Head of caudate nucleus (tissue), 42 donors: ENCODE measurements at regions of chr19 and their contacts with region 1.

Region 1: DNA sequence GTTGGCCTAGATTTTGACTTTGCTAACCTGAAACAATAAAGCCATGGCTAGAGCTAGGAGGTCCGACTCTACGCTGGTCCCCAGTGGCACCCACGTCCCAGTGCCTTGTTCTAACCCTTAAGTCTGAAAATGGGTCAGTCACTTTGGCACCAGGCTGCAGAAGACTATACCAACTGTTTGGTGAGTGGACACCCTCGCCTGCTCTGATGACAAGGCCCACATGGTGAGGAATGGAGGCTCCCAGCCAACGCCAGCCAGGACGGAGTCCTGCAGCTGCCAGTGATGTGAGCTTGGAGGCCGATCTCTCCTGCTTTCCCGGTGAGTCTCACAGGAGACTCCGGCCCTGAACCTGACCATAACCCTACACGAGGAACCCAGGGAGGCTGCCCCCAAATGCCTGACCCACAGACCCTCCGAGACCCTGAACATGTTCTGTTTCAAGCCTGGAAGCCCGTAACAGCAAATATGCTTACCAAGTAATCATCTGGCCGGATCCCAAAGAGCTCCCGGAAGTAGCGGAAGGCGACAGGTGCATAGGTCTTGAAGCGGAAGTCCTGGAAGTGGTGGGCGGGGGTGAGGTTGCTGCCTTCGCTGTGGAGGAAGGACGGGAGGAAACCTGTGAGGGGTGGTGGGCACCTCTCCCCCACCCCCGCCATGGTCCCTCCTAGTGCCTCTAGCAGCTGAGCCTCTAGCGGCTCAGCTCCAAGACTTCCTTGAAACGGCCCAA is 34.1 kb upstream of the CACTIN start:
- DNase-seq: no peak

Region 2: GRCh38 chr19:3716147-3716668 is 55.6 kb after region 1 on chr19:
- intact Hi-C with region 1: loop called (anchors 5 kb)
- DNase-seq: no peak